Naive thymus-derived CD4-positive, alpha-beta T cell (primary cell): ENCODE measurements at regions of chr7 and their contacts with region 1.

Region 1: DNA sequence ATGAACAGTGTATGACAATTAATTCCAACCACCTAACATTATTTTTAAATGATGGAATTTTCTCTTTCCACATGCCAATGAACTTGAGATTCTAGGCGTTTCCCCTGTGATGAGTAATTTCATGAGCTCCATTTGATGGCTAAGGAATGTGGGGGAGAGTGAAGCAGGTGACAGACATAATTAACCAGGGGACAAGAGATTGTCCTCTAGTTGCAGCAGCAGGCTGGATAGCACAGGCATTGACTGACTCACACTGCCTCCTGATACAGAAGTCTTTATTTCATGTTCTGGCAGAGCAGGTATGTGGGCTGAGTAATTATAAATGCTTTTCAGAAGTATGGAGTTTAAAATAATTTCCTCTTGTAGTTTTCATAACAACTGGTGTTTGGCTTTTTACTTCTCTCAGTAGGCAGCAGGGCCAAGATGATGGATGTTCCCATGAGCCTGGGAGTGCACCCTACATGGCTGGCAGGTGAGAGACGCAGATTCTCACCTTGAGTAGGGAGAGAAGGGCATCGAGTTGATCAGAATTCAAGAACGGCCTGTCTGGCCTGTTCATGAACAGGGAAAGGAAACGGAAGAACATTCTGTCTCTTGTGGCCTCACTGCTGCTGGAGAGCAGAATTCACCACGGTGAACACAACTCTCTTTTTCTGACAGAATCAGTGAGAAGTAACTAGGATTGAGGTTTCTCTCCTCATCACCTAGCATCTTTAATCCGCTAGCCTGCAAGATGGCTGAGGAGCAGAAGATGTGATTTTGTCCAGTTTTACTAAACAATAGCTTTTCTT is 118.8 kb downstream of the AOAH start:
- DNase-seq: peak in 5 of 9 donors; percentile 9 to 25 (median 20)
- ATAC-seq: no peak
- H3K4me3 ChIP-seq: no peak overlapping the region
- H3K4me3 Mint-ChIP-seq: peak overlapping the region in 8 of 10 donors; percentile 57 to 86 (median 66)
- H3K27ac ChIP-seq: peak overlapping the region; percentile 31
- H3K27ac Mint-ChIP-seq: peak overlapping the region in 8 of 9 donors; percentile 64 to 93 (median 90)
- H3K4me1 ChIP-seq: peaks cover 0 to 49% of the 10 kb centered on the region in 2 donors
- H3K4me1 Mint-ChIP-seq: peaks cover 41 to 84% (median 69%) of the 10 kb centered on the region in 7 donors
- H3K27me3 ChIP-seq: no peaks in the 10 kb centered on the region
- H3K27me3 Mint-ChIP-seq: no peaks in the 10 kb centered on the region

Region 2: GRCh38 chr7:36570528-36571189 is 34.8 kb before region 1 on chr7:
- CTCF ChIA-PET with region 1: no interaction called
- POLR2A ChIA-PET with region 1: interaction called, 3 read pairs
- intact Hi-C with region 1: loop called in 1 of 2 experiments (anchors 2 kb)
- DNase-seq: peak in 3 of 9 donors; percentile 6 to 14 (median 7)
- ATAC-seq: peak; percentile 24
- H3K4me3 ChIP-seq: no peak overlapping the region
- H3K4me3 Mint-ChIP-seq: peak overlapping the region in 5 of 10 donors; percentile 1 to 58 (median 39)
- H3K27ac ChIP-seq: no peak overlapping the region
- H3K27ac Mint-ChIP-seq: peak overlapping the region in 4 of 9 donors; percentile 18 to 79 (median 44)
- H3K4me1 ChIP-seq: peaks cover 5 to 10% of the 10 kb centered on the region in 2 donors
- H3K4me1 Mint-ChIP-seq: peaks cover 6 to 27% (median 17%) of the 10 kb centered on the region in 7 donors
- H3K27me3 ChIP-seq: no peaks in the 10 kb centered on the region
- H3K27me3 Mint-ChIP-seq: no peaks in the 10 kb centered on the region

Region 3: GRCh38 chr7:37259319-37259821 is 653.9 kb after region 1 on chr7:
- CTCF ChIA-PET with region 1: no interaction called
- POLR2A ChIA-PET with region 1: no interaction called
- intact Hi-C with region 1: no loop called
- DNase-seq: no peak
- ATAC-seq: peak; percentile 36
- H3K4me3 ChIP-seq: no peak overlapping the region
- H3K4me3 Mint-ChIP-seq: peak overlapping the region in 4 of 10 donors; percentile 14 to 46 (median 30)
- H3K27ac ChIP-seq: no peak overlapping the region
- H3K27ac Mint-ChIP-seq: peak overlapping the region; percentile 9 to 77 (median 59)
- H3K4me1 ChIP-seq: no peaks in the 10 kb centered on the region
- H3K4me1 Mint-ChIP-seq: peaks cover 25 to 50% (median 38%) of the 10 kb centered on the region in 7 donors
- H3K27me3 ChIP-seq: no peaks in the 10 kb centered on the region
- H3K27me3 Mint-ChIP-seq: no peaks in the 10 kb centered on the region